CD8-positive, alpha-beta T cell (primary cell): ENCODE measurements at regions of chr5 and their contacts with region 1.

Region 1: GRCh38 chr5:163408311-163408923 is 29.0 kb upstream of the CCNG1 start:
- DNase-seq: peak; percentile 20 to 74 (median 56)
- ATAC-seq: peak; percentile 85
- H3K4me3 ChIP-seq: no peak overlapping the region
- H3K4me3 Mint-ChIP-seq: peak overlapping the region; percentile 19
- H3K27ac ChIP-seq: no peak overlapping the region
- H3K27ac Mint-ChIP-seq: no peak overlapping the region
- H3K4me1 ChIP-seq: no peaks in the 10 kb centered on the region
- H3K4me1 Mint-ChIP-seq: peaks cover 3% of the 10 kb centered on the region
- H3K27me3 ChIP-seq: no peaks in the 10 kb centered on the region
- H3K27me3 Mint-ChIP-seq: peaks cover 3% of the 10 kb centered on the region
- CTCF ChIP-seq: peak; percentile 92

Region 2: DNA sequence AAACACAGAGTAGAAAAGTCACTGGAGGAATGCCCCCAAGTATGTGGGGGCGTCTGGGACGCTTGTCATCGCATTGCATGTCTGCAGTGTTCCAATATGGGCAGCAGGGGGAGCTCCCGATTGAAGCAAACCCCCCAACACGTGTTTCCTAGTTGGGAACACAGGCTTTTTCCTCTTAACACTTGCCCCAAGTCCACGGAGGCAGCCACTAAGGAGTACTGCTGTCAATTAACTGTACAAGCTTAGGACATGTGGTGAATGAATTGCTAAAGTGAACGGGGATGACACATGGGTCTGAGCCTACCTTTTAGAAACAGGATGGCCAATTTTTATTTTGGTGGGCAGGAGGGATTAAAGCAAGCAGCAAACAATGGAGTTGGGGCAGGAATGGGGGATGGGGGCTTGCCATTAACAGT is 1864.1 kb before region 1 on chr5:
- CTCF ChIA-PET with region 1: interaction called, 3 read pairs
- POLR2A ChIA-PET with region 1: no interaction called
- intact Hi-C with region 1: loop called in 1 of 2 experiments (anchors 10 kb)
- DNase-seq: peak in 2 of 9 experiments; percentile 11 to 18
- ATAC-seq: no peak
- H3K4me3 ChIP-seq: no peak overlapping the region
- H3K4me3 Mint-ChIP-seq: no peak overlapping the region
- H3K27ac ChIP-seq: no peak overlapping the region
- H3K27ac Mint-ChIP-seq: no peak overlapping the region
- H3K4me1 ChIP-seq: no peaks in the 10 kb centered on the region
- H3K4me1 Mint-ChIP-seq: peaks cover 10% of the 10 kb centered on the region
- H3K27me3 ChIP-seq: peaks cover 3 to 7% of the 10 kb centered on the region in 2 experiments
- H3K27me3 Mint-ChIP-seq: peaks cover 42% of the 10 kb centered on the region
- CTCF ChIP-seq: no peak

Region 3: DNA sequence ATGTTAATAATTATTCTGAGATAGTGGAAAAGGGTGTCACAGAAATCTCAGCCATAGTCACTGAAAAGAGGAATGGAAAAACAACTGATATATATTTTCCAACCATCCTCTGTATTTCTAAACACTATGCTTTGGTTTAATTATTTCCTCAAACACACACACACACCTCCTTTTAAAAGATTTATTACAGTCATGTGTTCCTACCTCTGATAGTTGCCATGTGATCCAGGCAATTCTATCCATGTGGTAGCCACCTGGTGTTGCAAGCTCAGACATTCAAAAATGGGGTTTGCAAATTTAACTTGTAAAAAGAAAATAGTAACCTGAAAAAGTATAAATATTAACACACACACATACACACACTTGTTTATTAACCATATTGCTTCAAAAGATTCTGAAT is 11.1 kb before region 1 on chr5:
- CTCF ChIA-PET with region 1: interaction called, 24 read pairs
- POLR2A ChIA-PET with region 1: no interaction called
- intact Hi-C with region 1: no loop called
- DNase-seq: no peak
- ATAC-seq: no peak
- H3K4me3 ChIP-seq: no peak overlapping the region
- H3K4me3 Mint-ChIP-seq: no peak overlapping the region
- H3K27ac ChIP-seq: no peak overlapping the region
- H3K27ac Mint-ChIP-seq: no peak overlapping the region
- H3K4me1 ChIP-seq: no peaks in the 10 kb centered on the region
- H3K4me1 Mint-ChIP-seq: no peaks in the 10 kb centered on the region
- H3K27me3 ChIP-seq: peaks cover 0 to 2% of the 10 kb centered on the region in 2 experiments
- H3K27me3 Mint-ChIP-seq: peaks cover 15% of the 10 kb centered on the region
- CTCF ChIP-seq: no peak